ENCODE measurements at regions of chr10 and their contacts with region 1.

Region 1: GRCh38 chr10:28381903-28382347 is 79.1 kb upstream of the MPP7 start:
- DNase-seq: peak; percentile 69 to 91
- ATAC-seq: peak; percentile 95

Region 2: DNA sequence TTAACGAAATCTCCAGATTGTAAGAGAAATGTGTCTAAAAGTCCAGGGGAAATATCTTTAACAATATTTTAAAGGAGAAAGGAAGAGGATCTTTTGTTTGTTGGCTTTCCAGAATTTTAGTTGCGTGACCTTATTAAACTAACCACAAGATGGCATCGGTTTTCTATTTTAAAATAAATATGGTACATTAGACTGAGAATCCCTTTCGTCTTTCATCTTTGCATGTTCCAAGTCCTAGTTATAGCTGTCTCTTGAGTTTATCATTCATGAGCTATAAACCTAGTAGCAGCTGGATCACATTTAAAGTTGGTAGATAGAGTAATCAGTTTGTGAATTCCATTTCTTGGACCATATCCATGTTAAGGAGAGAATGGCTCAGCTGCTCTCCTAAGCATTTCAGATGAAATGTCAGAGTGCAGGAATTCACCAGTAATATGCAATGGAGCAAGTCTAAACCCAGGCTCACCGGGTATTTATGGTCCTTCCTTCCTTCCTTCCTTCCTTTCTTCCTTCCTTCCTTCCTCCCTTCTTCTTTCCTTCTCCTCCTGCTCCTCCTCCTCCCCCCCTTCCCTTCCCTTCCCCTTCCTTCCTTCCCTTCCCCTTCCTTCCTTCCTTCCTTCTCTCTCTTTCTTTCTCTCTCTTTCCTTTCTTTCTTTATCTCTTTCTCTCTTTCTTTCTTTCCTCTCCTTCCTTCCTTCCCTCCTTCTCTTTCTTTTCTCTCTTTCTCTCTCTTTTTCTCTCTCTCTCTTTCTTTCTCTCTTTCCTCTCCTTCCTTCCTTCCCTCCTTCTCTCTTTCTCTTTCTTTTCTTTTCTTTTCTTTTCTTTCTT is 935.6 kb before region 1 on chr10:
- intact Hi-C with region 1: loop called in 1 of 2 experiments (anchors 10 kb)
- DNase-seq: no peak
- ATAC-seq: no peak

Region 3: GRCh38 chr10:28250782-28251181 is 131.1 kb before region 1 on chr10:
- intact Hi-C with region 1: loop called (anchors 1 to 10 kb)
- DNase-seq: no peak
- ATAC-seq: peak; percentile 56

Region 4: DNA sequence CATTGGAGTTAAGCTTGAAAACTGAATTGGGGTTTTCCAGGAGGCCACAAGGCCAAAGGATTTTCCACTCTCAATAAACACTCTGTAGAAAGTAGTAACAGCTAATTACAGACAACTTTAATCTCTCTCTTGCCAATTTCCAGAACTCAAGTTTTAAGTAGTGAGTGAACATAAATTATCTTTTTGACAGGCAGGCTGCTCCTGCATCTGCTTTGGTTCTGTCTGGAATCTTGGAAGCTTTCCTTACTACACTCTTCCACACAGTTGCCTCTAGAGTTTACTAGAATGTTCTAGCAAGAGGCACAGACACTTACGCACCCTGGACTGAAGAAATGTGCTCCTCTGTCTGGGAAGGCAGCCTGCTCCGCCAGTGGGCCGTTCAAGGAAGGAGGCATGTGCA is 60.5 kb after region 1 on chr10:
- intact Hi-C with region 1: no loop called
- DNase-seq: no peak
- ATAC-seq: no peak